ENCODE measurements at regions of chr7 and their contacts with region 1.

Region 1: DNA sequence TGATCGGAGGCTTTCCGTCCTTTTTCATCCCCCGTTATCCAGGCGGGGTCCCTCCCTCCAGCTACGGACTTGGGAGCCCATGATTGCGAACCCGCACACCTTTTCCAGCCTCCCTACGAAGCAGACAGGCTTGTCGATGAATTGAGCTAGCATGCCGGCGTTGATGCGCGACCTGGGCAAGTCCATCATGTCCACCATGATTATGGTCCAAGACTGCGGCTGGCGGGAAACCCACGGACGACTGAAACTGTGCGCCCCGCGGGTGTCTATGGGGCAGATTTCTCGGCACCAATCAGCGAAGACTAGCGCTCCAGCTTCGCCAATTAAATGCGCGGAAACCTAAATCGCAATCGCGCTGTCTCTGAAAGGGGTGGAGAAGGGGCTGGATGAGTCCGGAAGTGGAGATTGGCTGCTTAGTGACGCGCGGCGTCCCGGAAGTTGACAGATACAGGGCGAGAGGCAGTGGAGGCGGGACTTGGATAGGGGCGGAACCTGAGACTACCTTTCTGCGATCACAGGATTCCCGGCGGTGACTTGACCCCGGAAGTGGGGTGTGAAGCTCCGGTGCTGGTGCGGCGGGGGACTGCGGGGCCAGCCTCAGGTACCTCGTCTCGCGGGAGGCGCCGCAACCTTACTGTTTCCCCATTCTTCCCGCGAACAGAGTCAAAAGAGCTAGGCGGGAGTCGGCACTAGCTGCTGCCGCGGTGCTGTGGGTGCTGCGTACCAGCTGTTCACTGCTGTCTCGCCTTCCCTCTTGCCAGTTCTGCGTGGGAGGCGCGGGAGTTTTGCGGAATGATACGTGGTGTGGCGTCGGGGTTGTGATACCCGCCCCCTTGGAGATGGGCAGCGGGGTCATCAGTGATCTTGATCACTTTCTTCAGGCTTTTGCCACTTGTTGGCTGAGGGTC is at the start of gene UMAD1:
- DNase-seq: peak; percentile 99
- H3K4me3 ChIP-seq: peak within 1 kb of the TSS; percentile 78 to 83
- H3K27ac ChIP-seq: peak within 1 kb of the TSS; percentile 95 to 96
- H3K4me1 ChIP-seq: no peaks in the 10 kb centered on the region
- H3K27me3 ChIP-seq: no peaks in the 10 kb centered on the region
- CTCF ChIP-seq: no peak
- POLR2A ChIP-seq: peak; percentile 71
- total RNA-seq, gene UMAD1: 19.5 to 31.4 TPM

Region 2: GRCh38 chr7:6917258-6917657 is 723.2 kb before region 1 on chr7:
- intact Hi-C with region 1: no loop called
- DNase-seq: no peak
- H3K4me3 ChIP-seq: no peak overlapping the region
- H3K27ac ChIP-seq: no peak overlapping the region
- H3K4me1 ChIP-seq: no peaks in the 10 kb centered on the region
- H3K27me3 ChIP-seq: no peaks in the 10 kb centered on the region
- CTCF ChIP-seq: no peak
- POLR2A ChIP-seq: no peak

Region 3: DNA sequence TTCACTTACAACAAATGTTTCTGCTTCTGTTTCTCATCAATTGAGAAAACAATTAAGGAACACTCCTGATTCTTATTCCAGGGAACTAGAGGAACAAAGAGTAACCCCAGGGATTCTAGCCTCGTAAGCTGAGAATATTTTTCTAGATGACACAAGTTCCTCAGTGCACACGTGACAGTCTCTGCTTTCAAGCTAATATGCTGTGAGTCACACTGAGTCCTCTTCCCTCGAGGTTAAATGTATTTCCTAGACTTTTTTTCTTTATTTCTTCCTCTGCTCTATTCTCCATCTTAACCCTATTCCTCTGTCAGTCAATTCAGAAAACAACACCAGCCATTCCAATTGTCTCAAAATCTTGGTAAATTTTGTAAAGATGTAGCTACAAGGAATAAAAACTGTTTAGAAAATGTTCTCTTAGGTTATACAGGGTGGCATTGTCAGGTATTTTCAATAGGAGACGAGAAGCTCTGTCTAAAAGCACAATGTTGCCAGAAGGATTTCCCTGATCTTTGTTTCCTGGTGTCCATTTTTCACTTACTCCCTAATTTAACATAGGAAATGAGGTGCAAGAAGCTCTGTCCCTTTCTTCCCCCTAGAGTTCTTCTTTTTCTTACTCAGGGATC is 463.9 kb before region 1 on chr7:
- intact Hi-C with region 1: loop called (anchors 5 kb)
- DNase-seq: no peak
- H3K4me3 ChIP-seq: no peak overlapping the region
- H3K27ac ChIP-seq: no peak overlapping the region
- H3K4me1 ChIP-seq: no peaks in the 10 kb centered on the region
- H3K27me3 ChIP-seq: no peaks in the 10 kb centered on the region
- CTCF ChIP-seq: no peak
- POLR2A ChIP-seq: no peak

Region 4: DNA sequence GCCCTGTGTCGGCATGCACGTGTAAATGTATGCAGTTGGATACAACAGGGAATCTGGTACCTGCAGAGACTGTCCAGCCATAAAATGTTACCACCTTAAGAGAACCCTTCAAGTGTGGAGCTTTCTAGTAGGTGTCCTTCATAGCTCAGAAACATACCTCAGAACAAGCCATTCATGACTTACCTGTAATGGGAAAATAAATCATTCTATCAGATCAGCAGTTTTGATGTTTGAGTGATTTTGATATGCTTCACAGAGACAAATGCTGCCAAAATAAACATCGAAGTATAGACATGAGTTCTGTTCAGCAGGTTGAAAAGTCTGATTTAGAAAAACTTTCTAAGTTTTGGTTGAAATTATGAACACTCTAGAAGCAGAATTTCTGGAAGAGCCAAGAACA is 33.5 kb before region 1 on chr7:
- intact Hi-C with region 1: no loop called
- DNase-seq: no peak
- H3K4me3 ChIP-seq: no peak overlapping the region
- H3K27ac ChIP-seq: no peak overlapping the region
- H3K4me1 ChIP-seq: no peaks in the 10 kb centered on the region
- H3K27me3 ChIP-seq: no peaks in the 10 kb centered on the region
- CTCF ChIP-seq: no peak
- POLR2A ChIP-seq: no peak

Region 5: GRCh38 chr7:7968543-7969305 is 328.2 kb after region 1 on chr7 and contains the start of gene GLCCI1:
- intact Hi-C with region 1: loop called (anchors 10 kb)
- DNase-seq: peak; percentile 98
- H3K4me3 ChIP-seq: peak within 1 kb of the TSS; percentile 88 to 91
- H3K27ac ChIP-seq: peak within 1 kb of the TSS; percentile 96 to 99
- H3K4me1 ChIP-seq: no peaks in the 10 kb centered on the region
- H3K27me3 ChIP-seq: no peaks in the 10 kb centered on the region
- CTCF ChIP-seq: peak in 1 of 4 experiments; percentile 4
- POLR2A ChIP-seq: peak; percentile 92
- total RNA-seq, gene GLCCI1: 9.1 to 9.2 TPM

Measured in prostate gland (tissue), 2 donors.